AG04450 (cell line): ENCODE measurements at regions of chr22 and their contacts with region 1.

Region 1: DNA sequence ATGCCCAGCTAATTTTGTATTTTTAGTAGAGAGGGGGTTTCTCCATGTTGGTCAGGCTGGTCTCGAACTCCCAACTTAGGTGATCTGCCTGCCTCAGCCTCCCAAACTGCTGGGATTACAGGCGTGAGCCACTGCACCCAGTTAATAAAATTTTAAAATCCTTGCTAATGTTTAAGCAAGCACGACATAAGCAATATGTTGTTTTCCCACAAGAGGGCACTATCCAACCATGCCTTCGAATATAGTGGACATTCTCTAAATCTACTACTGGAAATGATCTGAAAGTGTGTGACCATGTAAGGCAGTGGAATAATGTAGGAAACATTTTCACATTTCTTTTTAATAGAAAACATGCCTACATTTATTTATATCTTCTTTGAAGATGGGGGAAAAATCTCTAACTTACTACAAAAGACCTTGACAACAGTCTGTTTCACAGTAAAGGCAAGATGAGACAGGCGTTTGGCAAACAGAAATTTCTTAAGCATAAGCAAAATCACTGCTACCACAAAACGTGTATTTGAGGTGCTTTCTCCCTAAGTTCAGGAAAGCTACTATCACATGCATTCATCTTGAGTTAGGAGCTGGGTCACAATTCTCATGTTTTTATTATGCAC is 38.2 kb downstream of the PITPNB start:
- DNase-seq: peak; percentile 72
- H3K4me3 ChIP-seq: no peak overlapping the region
- H3K27ac ChIP-seq: peak overlapping the region; percentile 69
- H3K27me3 ChIP-seq: no peaks in the 10 kb centered on the region
- CTCF ChIP-seq: peak; percentile 81

Region 2: GRCh38 chr22:27866132-27867086 is 14.5 kb before region 1 on chr22:
- CTCF ChIA-PET with region 1: interaction called, 17 read pairs
- POLR2A ChIA-PET with region 1: interaction called, 6 read pairs
- DNase-seq: peak; percentile 94
- H3K4me3 ChIP-seq: no peak overlapping the region
- H3K27ac ChIP-seq: peak overlapping the region; percentile 98
- H3K27me3 ChIP-seq: no peaks in the 10 kb centered on the region
- CTCF ChIP-seq: no peak

Region 3: GRCh38 chr22:27997538-27997937 is 116.7 kb after region 1 on chr22:
- CTCF ChIA-PET with region 1: interaction called, 10 read pairs
- POLR2A ChIA-PET with region 1: interaction called, 4 read pairs
- DNase-seq: no peak
- H3K4me3 ChIP-seq: no peak overlapping the region
- H3K27ac ChIP-seq: peak overlapping the region; percentile 11
- H3K27me3 ChIP-seq: no peaks in the 10 kb centered on the region
- CTCF ChIP-seq: no peak

Region 4: DNA sequence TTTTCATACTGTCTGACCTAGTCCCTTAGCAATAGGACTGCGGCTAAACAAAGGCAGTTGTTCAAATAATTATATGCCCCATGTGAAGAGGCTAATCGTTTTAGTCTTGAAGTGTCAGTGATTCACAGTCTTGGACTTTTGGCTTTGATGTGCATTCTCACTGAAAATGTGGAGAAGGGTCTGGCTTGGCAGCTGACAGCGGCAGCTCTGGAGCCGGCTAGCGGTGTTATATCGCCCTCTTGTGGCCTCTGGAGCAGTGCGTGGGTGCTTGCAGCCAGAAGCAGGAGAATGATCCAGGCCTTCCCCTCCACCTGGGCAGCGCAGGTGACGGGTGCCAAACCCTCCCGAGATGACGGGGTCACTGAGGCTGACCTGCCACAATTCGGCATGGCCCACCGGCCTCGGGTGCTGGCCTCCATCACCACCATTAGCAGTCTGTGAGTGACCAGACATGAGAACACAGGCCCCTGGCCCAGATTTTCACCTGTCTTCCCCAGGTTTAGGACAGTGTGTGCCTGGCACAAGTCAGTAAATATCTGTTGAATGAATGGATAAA is 128.5 kb after region 1 on chr22:
- CTCF ChIA-PET with region 1: interaction called, 14 read pairs
- POLR2A ChIA-PET with region 1: interaction called, 5 read pairs
- DNase-seq: peak; percentile 67
- H3K4me3 ChIP-seq: no peak overlapping the region
- H3K27ac ChIP-seq: no peak overlapping the region
- H3K27me3 ChIP-seq: no peaks in the 10 kb centered on the region
- CTCF ChIP-seq: peak; percentile 98

Region 5: GRCh38 chr22:28466399-28466798 is 585.5 kb after region 1 on chr22:
- CTCF ChIA-PET with region 1: no interaction called
- POLR2A ChIA-PET with region 1: no interaction called
- DNase-seq: no peak
- H3K4me3 ChIP-seq: no peak overlapping the region
- H3K27ac ChIP-seq: no peak overlapping the region
- H3K27me3 ChIP-seq: no peaks in the 10 kb centered on the region
- CTCF ChIP-seq: no peak

Region 6: DNA sequence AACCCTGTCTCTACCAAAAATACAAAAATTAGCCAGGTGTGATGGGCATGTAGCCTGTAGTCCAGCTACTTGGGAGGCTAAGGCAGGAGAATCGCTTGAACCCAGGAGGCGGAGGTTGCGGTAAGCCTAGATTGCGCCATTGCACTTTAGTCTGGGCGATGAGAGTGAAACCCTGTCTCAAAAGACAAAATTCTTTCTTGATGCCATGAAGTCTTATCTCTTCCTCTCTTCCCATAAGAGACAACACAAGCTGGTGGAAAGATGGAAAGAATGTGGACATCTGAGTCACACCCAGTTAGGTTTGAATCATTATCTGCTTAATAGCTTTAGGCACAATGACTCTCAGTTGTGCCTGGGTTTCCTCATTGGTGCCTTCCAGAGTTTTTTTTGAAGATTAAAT is 1227.2 kb after region 1 on chr22:
- CTCF ChIA-PET with region 1: no interaction called
- POLR2A ChIA-PET with region 1: no interaction called
- DNase-seq: no peak
- H3K4me3 ChIP-seq: no peak overlapping the region
- H3K27ac ChIP-seq: no peak overlapping the region
- H3K27me3 ChIP-seq: no peaks in the 10 kb centered on the region
- CTCF ChIP-seq: no peak